ENCODE measurements at regions of chr18 and their contacts with region 1.

Region 1: DNA sequence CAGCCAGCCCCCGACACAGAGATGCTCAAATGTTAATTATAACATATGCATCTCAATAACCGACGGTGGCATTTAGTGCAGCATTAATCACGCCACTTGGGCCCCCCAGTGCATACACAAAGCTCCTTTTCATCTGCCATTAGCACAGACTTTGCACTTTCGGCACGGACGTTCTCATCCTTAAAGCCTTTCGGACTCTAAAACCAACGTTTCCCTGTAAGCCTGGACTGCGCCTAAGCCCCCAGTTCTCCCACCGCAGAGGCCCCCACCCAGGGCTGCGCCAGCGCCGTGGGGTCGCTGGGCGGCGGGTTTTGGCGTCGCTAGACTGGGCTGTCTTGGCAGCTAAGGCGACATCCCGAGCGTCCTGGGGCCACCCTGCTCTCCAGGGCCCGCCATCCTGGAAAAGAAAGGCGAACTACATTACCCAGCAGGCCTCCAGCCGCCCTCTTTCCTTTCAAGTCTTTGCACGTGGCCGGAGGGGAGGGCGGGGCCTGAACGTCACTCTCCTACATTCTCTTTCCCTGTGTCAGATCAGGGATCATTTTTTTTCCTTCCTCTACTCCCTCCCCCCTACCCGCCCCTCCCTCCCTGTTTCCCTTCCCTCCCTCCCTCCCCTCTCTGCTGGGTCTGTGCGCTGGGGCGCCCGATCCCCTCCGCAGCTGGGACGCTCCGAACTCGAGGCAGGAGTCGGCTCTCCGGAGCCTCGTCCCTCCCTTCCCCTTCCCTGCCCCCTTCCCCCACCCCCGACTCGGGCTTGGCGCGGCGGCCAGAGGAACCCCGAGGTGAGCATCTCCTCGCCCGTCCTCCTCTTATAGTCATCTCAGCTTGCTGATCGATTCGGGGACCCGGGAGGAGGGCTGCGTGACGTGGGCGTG is at the start of gene CTIF:
- DNase-seq: peak; percentile 95 to 100 (median 98)

Region 2: GRCh38 chr18:48293954-48294898 is 244.5 kb before region 1 on chr18:
- intact Hi-C with region 1: no loop called
- DNase-seq: peak in 6 of 42 donors; percentile 7 to 44 (median 20)

Region 3: DNA sequence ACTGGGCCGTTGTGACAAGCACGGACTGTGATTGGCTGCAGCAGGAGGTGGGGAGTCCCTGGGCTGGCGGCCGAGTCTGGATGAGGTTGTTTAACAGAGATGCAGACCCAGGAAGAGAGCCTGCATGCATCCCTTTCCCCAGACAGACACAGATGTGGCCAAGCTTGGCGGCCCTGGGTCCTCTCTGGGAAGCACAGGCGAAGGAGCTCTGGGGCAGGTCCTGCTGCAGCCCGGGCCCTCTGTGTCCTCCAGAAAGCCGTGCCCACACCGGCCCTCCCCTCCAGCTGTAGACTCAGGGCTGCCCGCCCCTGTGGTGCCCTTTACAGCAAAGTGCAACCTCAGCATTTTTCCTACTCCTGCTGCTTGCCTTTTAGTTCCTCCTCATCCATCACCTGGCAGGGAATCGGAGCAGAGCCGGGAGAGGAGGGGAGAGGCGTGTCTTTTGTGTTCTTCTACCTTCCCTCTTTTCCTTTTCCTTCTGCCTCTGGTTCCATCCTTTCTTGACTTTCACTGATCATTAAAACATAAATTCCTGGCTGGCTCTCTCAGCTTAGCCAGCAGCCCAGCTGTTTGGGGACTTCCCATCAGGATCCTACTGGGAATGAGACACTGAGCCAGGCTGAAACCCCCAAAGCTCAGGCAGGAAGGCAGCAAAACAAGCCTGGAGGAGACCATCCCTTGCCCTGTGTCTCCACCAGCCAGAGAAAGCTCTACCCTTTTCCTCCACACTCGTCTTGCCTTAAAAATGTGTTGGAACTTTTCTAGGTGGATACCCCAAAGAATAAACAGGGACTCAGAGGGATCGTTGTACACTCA is 75.0 kb after region 1 on chr18:
- intact Hi-C with region 1: loop called (anchors 10 kb)
- DNase-seq: peak; percentile 60 to 91 (median 83)

Measured in head of caudate nucleus (tissue), 42 donors.